MCF 10A (cell line): ENCODE measurements at regions of chr4 and their contacts with region 1.

Region 1: DNA sequence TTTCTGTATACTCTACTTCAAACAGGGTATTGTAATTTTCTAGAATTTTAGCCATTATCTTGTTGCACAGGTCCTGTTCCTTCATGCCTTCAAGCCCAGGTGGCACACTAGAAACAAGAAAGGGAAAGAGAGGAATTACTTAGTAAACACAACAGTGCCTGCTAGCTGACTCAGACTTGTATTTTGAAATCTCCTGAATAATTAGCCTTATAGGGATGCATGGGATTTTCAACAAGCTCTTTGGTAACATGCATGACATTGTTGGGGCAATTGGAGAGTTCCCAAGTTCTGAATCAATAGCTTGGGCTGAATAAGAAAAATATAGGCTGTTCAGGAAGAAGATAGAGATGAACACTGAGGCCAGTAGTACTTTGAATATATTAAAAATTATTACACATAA is 118.8 kb downstream of the FAM13A start:
- DNase-seq: peak; percentile 94
- H3K4me3 Mint-ChIP-seq: peak overlapping the region; percentile 5
- H3K27ac Mint-ChIP-seq: peak overlapping the region; percentile 94
- H3K4me1 Mint-ChIP-seq: peaks cover 12% of the 10 kb centered on the region
- H3K27me3 Mint-ChIP-seq: no peaks in the 10 kb centered on the region
- CTCF ChIP-seq: no peak

Region 2: DNA sequence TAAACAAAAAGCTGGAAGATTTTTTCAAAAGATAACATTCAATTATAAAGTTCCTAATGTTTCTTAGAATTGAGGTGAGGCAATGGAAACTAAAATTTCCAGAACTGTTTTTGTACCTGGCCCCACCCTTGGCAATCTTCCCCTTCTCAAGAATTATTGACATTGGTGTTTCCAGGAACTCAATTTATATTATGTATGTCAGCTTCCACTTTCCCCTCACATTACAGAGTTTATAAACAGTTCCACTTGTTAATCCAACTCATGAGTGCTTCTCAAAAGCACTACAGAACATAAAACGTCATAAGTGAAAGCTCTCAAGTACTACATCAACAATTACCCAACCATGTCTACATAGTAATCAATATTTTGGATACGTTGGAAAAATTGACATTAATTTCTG is 11.5 kb after region 1 on chr4:
- CTCF ChIA-PET with region 1: no interaction called
- POLR2A ChIA-PET with region 1: interaction called, 14 read pairs
- intact Hi-C with region 1: no loop called
- DNase-seq: no peak
- H3K4me3 Mint-ChIP-seq: no peak overlapping the region
- H3K27ac Mint-ChIP-seq: peak overlapping the region; percentile 56
- H3K4me1 Mint-ChIP-seq: peaks cover 27% of the 10 kb centered on the region
- H3K27me3 Mint-ChIP-seq: no peaks in the 10 kb centered on the region
- CTCF ChIP-seq: no peak

Region 3: DNA sequence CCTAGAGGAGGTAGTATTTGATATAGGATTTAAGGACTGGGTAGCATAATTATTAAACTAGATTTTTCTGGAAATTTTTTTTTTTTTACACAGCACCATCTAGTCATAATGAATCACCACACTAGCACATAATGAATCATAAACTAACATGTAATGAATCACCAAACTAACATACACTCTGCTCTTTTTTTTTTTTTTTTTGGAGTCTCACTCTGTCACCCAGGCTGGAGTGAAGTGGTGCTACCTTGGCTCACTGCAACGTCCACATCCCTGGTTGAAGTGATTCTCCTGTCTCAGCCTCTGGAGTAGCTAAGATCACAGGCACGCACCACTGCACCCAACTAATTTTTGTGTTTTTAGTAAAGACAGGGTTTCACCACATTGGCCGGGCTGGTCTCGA is 26.3 kb after region 1 on chr4:
- CTCF ChIA-PET with region 1: no interaction called
- POLR2A ChIA-PET with region 1: interaction called, 23 read pairs
- intact Hi-C with region 1: no loop called
- DNase-seq: peak; percentile 65
- H3K4me3 Mint-ChIP-seq: peak overlapping the region; percentile 18
- H3K27ac Mint-ChIP-seq: peak overlapping the region; percentile 94
- H3K4me1 Mint-ChIP-seq: peaks cover 29% of the 10 kb centered on the region
- H3K27me3 Mint-ChIP-seq: no peaks in the 10 kb centered on the region
- CTCF ChIP-seq: no peak

Region 4: GRCh38 chr4:89110986-89111832 is 173.1 kb after region 1 on chr4 and contains the start of gene TIGD2:
- CTCF ChIA-PET with region 1: no interaction called
- POLR2A ChIA-PET with region 1: interaction called, 3 read pairs
- intact Hi-C with region 1: loop called (anchors 5 kb)
- DNase-seq: peak; percentile 90
- H3K4me3 Mint-ChIP-seq: peak within 1 kb of the TSS; percentile 79
- H3K27ac Mint-ChIP-seq: peak within 1 kb of the TSS; percentile 61
- H3K4me1 Mint-ChIP-seq: peaks cover 11% of the 10 kb centered on the region
- H3K27me3 Mint-ChIP-seq: no peaks in the 10 kb centered on the region
- CTCF ChIP-seq: peak; percentile 79
- total RNA-seq, gene TIGD2: 15.1 and 15.5 TPM in 2 replicates

Region 5: GRCh38 chr4:89230271-89230670 is 292.1 kb after region 1 on chr4:
- CTCF ChIA-PET with region 1: no interaction called
- POLR2A ChIA-PET with region 1: no interaction called
- intact Hi-C with region 1: no loop called
- DNase-seq: no peak
- H3K4me3 Mint-ChIP-seq: no peak overlapping the region
- H3K27ac Mint-ChIP-seq: no peak overlapping the region
- H3K4me1 Mint-ChIP-seq: no peaks in the 10 kb centered on the region
- H3K27me3 Mint-ChIP-seq: no peaks in the 10 kb centered on the region
- CTCF ChIP-seq: no peak

Region 6: GRCh38 chr4:89586864-89587263 is 648.7 kb after region 1 on chr4:
- CTCF ChIA-PET with region 1: no interaction called
- POLR2A ChIA-PET with region 1: no interaction called
- intact Hi-C with region 1: no loop called
- DNase-seq: peak; percentile 24
- H3K4me3 Mint-ChIP-seq: no peak overlapping the region
- H3K27ac Mint-ChIP-seq: no peak overlapping the region
- H3K4me1 Mint-ChIP-seq: no peaks in the 10 kb centered on the region
- H3K27me3 Mint-ChIP-seq: no peaks in the 10 kb centered on the region
- CTCF ChIP-seq: peak; percentile 13